Cardiac septum (tissue), 1 donor: ENCODE measurements at regions of chr15 and their contacts with region 1.

Region 1: DNA sequence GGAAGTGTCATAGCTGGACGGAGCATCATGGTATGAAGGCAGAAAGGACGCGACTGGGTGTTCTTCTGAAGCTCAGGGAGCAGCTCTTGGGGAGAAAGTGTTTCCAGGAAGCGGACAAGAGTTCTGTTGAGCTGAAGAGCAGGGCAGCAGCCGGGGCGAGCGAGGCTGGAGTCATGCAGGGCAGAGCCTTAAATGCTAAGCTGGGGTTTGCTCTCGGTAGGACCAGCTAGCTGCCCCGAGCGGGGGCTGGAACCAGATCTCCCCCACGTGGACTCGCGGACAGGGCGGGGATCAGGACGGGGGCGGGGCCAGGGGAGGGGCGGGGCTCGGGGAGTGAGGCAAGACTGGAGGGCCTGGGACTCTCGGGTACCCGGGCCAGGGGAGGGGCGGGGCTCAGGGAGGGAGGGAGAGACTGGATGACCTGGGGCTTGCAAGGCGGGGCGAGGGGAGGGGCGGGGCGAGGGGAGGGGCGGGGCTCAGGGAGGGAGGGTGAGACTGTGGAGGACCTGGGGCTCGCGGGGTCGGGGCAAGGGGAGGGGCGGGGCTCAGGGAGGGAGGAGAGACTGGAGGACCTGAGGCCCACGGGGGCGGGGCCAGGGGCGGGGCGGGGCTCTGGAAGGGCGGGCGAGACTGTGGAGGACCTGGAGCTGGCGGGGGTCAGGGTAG is 486 bp upstream of the FAH start:
- DNase-seq: peak; percentile 96

Region 2: DNA sequence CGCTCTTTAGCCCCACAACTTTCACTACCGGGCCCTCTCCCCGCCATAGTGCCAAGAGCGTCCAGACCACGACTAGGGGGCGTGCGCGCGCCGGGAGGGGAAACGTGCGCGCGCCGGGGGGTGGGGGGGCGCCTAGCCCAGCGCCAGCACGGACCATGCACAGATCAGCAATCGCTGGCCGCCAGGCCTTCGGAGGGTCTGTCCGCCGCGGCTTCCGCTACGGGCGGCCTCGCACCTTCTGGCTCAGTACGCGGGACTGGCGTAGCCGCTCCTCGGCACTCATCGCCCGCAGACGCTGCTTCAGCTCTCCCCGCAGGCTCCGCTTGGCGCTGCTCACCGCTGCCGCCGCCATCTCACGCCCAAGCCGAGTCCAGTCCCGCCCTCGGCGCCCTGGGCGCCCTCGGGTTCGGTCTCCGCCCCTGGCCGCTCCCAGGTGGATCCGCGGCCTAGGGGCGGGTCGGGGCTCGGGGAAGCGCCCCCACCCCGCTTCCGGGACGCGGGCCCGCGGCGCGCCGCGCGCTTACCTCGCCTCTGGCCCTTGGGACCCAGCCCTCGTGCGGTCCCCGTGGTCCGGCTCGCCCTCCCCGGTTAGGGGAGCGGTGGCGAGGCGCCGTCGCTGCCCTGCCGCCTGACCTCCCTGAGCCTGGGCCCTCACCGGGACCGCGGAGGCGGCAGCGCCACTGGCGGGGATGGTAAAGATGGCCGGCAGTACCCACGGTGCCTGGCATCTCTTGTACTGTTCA is 255.5 kb before region 1 on chr15 and contains the start of gene MTHFS:
- intact Hi-C with region 1: loop called (anchors 10 kb)
- DNase-seq: peak; percentile 93
- total RNA-seq, gene MTHFS: 16.7 TPM

Region 3: GRCh38 chr15:79923515-79924395 is 228.6 kb before region 1 on chr15:
- intact Hi-C with region 1: loop called (anchors 5 kb)
- DNase-seq: peak; percentile 99

Region 4: DNA sequence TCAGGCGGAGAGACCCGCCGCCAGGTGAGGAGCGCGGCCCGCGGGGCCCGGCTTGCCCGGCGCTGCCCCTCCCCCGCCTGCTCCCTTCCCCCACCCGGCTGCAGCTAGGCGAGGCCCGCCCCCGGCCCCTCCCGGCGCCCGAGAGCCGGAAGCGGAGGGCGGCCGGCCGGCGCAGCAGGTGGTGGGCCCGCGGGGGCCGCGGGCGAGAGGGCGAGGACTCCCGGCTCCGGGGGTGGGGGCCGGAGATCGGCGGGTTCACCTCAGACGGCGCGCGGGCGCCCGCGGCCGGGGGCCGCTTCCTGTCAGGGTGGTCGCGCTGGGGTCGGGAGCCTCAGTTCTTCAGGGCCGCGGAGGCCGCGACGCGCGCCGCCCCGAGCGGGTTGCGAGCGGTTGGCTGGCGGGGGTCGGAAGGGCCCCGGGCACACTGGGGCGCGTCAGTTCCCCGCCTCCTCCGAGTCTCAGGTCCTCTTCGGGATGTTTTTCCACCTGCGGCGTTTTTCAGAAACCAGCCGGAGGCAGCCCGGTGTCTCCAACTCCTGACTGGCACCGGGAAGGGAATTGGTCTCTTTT is 92.4 kb before region 1 on chr15:
- intact Hi-C with region 1: loop called (anchors 5 kb)
- DNase-seq: peak; percentile 78

Region 5: GRCh38 chr15:80105595-80106450 is 46.5 kb before region 1 on chr15:
- intact Hi-C with region 1: no loop called
- DNase-seq: no peak